ENCODE measurements at regions of chr1 and their contacts with region 1.

Region 1: GRCh38 chr1:183685112-183685713 is 32.1 kb upstream of the APOBEC4 start:
- DNase-seq: no peak
- H3K4me3 ChIP-seq: no peak overlapping the region
- H3K27ac ChIP-seq: no peak overlapping the region
- H3K4me1 ChIP-seq: peaks cover 0 to 2% (median 0%) of the 10 kb centered on the region in 4 experiments; a peak in 1 of 7 replicates
- H3K27me3 ChIP-seq: no peaks in the 10 kb centered on the region
- CTCF ChIP-seq: peak in 2 of 3 experiments; percentile 58 to 71; a peak in 3 of 4 replicates
- EP300 ChIP-seq: no peak
- POLR2A ChIP-seq: no peak
- RAD21 ChIP-seq: peak; percentile 81 to 82

Region 2: GRCh38 chr1:183543619-183544204 is 141.5 kb before region 1 on chr1:
- CTCF ChIA-PET with region 1: no interaction called
- POLR2A ChIA-PET with region 1: no interaction called
- DNase-seq: no peak
- H3K4me3 ChIP-seq: no peak overlapping the region
- H3K27ac ChIP-seq: no peak overlapping the region
- H3K4me1 ChIP-seq: peaks cover 1 to 5% (median 4%) of the 10 kb centered on the region in 4 experiments; a peak in 5 of 7 replicates
- H3K27me3 ChIP-seq: no peaks in the 10 kb centered on the region
- CTCF ChIP-seq: peak in 2 of 3 experiments; percentile 57 to 72; a peak in 3 of 4 replicates
- EP300 ChIP-seq: no peak
- POLR2A ChIP-seq: no peak
- RAD21 ChIP-seq: peak; percentile 66

Region 3: GRCh38 chr1:183646776-183647175 is 38.4 kb before region 1 on chr1:
- CTCF ChIA-PET with region 1: interaction called, 20 read pairs
- POLR2A ChIA-PET with region 1: no interaction called
- DNase-seq: no peak
- H3K4me3 ChIP-seq: no peak overlapping the region
- H3K27ac ChIP-seq: no peak overlapping the region
- H3K4me1 ChIP-seq: no peaks in the 10 kb centered on the region
- H3K27me3 ChIP-seq: peaks cover 0 to 2% (median 0%) of the 10 kb centered on the region in 4 experiments; a peak in 1 of 7 replicates
- CTCF ChIP-seq: no peak
- EP300 ChIP-seq: no peak
- POLR2A ChIP-seq: no peak
- RAD21 ChIP-seq: no peak

Region 4: GRCh38 chr1:183670178-183670577 is 15.0 kb before region 1 on chr1:
- CTCF ChIA-PET with region 1: interaction called, 43 read pairs
- POLR2A ChIA-PET with region 1: no interaction called
- DNase-seq: no peak
- H3K4me3 ChIP-seq: no peak overlapping the region
- H3K27ac ChIP-seq: no peak overlapping the region
- H3K4me1 ChIP-seq: no peaks in the 10 kb centered on the region
- H3K27me3 ChIP-seq: no peaks in the 10 kb centered on the region
- CTCF ChIP-seq: no peak
- EP300 ChIP-seq: no peak
- POLR2A ChIP-seq: no peak
- RAD21 ChIP-seq: no peak

Region 5: DNA sequence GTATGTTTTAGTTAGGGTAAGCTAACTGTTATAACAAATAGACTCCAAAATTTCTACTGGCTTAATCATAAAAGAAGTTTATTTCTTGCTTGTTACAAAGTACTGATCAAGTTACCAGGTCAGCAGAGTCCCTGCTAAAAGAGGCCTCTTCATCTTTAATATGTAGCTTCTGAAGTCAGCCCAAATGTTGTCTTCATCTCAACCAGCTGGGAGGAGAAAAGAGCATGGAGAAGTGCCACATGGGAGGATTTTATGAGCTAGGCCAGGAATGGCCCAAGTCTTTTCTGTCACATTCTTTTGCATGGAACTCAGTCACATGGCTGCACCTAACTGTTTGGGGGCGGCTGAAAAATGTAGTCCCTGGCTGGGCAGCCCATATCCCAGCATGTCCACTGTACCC is 31.1 kb after region 1 on chr1:
- CTCF ChIA-PET with region 1: interaction called, 12 read pairs
- POLR2A ChIA-PET with region 1: interaction called, 3 read pairs
- DNase-seq: no peak
- H3K4me3 ChIP-seq: no peak overlapping the region
- H3K27ac ChIP-seq: no peak overlapping the region
- H3K4me1 ChIP-seq: peaks cover 0 to 5% (median 0%) of the 10 kb centered on the region in 4 experiments; a peak in 1 of 7 replicates
- H3K27me3 ChIP-seq: no peaks in the 10 kb centered on the region
- CTCF ChIP-seq: no peak
- EP300 ChIP-seq: no peak
- POLR2A ChIP-seq: no peak
- RAD21 ChIP-seq: no peak

Measured in H1 (cell line).